Activated CD4-positive, alpha-beta memory T cell treated with anti-CD3 and anti-CD28 coated beads, Interleukin-2, amount 10 ng/mL, durations not matched to agents 7 days and 5 days (primary cell): ENCODE measurements at regions of chr15 and their contacts with region 1.

Region 1: DNA sequence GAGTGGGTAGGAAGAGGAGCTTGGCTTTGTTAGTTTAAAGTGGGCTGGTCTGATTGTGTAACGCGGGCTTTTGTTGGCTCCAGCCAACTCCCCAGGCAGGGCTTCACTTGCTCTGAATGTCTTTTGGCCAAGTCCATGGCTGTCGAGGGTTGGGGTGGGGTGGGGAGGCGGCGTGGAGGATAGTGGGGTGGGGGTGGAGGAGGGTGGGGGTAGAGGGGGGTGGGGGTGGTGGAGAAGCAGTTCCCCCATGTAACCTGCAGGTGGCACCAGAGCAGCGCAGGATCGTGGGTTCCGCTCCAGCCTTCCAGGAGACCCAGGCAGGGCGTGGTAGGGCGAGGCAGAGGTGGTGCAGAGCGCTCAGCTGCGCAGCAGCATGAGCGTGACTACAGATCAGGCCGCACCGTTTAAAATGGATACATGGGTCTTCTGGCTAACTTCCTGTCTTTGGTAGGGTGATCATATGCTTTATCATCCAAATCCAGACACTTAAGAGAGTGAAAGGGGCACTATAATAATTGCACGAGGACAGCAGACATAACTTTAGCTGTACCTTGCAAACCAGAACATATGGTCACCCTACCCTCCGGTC is 28.3 kb downstream of the GOLGA6A start:
- DNase-seq: peak; percentile 78
- H3K4me3 Mint-ChIP-seq: no peak overlapping the region
- H3K27ac Mint-ChIP-seq: no peak overlapping the region
- H3K4me1 Mint-ChIP-seq: peaks cover 14% of the 10 kb centered on the region
- H3K27me3 Mint-ChIP-seq: peaks cover 2% of the 10 kb centered on the region

Region 2: GRCh38 chr15:73991726-73992593 is 62.1 kb before region 1 on chr15 and contains the start of gene STOML1:
- CTCF ChIA-PET with region 1: interaction called, 27 read pairs
- POLR2A ChIA-PET with region 1: interaction called, 3 read pairs
- DNase-seq: peak; percentile 95
- H3K4me3 Mint-ChIP-seq: peak within 1 kb of the TSS; percentile 76
- H3K27ac Mint-ChIP-seq: peak within 1 kb of the TSS; percentile 80
- H3K4me1 Mint-ChIP-seq: peaks cover 47% of the 10 kb centered on the region
- H3K27me3 Mint-ChIP-seq: no peaks in the 10 kb centered on the region
- total RNA-seq, gene STOML1: 7.1 to 8.5 TPM

Region 3: DNA sequence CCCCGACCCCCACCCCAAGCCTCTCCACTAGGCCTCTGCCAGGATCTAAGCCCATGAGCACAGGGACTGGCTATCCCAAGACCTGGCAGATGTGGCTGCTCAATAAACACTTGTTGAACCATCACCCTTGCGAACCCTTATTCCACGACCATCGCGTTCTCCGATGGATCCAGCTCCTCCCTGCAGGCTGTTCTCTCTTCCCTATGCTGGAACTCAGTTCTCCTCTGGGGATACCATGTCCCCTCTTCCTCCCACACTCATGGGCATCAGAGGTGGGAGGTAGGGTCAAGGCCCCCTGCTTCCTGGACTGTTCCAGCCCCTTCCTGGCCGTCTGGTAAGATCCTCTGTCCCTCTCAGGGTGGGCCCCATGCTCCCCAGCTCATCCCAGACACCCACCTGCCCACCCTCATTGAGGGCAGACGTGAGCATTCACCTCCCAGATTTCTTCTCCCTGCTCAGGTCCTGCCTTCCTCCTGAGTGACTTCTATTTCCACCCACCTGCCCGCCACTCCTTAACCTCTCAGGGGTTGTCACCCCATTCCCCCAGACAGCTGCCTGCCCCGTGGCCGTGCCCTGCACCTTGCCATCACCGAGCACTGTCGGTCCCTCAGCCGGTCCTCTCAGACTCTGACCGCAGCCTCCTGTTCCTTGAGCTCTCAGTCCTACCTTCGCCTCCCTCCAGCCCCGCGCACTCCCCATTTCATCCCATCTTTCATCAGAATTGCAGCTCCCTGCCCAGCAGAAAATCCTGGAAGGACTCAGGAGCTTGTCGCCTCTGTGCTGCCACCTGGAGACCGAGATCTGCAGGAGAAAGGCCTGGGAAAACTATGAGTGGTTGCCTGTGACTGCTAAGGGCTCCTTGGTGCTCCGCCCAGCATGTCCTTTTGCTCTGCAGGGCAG is 17.5 kb before region 1 on chr15:
- CTCF ChIA-PET with region 1: interaction called, 24 read pairs
- POLR2A ChIA-PET with region 1: interaction called, 4 read pairs
- DNase-seq: no peak
- H3K4me3 Mint-ChIP-seq: no peak overlapping the region
- H3K27ac Mint-ChIP-seq: no peak overlapping the region
- H3K4me1 Mint-ChIP-seq: no peaks in the 10 kb centered on the region
- H3K27me3 Mint-ChIP-seq: no peaks in the 10 kb centered on the region